ENCODE measurements at regions of chr4 and their contacts with region 1.

Region 1: DNA sequence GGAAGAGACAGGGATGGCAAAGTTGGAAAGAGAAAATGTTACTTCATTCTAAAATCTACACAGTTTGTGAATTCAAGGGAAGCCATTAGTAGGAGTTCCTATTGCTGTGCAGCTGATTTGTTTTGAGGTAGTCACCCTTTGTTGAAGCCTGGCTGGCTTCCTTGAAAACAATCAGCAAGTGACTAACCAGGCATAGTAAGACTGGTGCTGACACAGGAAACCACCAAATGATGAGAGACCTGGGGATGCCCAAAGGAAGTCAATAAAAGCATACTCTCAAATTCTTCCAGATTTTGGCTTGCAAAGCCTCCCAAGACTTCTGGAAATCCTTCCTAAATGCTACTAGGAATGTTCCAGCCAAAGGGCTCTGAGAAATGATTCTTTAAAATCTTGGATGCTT is 23.9 kb upstream of the PRDM8 start:
- DNase-seq: peak; percentile 71
- H3K4me3 Mint-ChIP-seq: peak overlapping the region; percentile 18
- H3K27ac Mint-ChIP-seq: peak overlapping the region; percentile 81
- H3K4me1 Mint-ChIP-seq: peaks cover 55% of the 10 kb centered on the region
- H3K27me3 Mint-ChIP-seq: no peaks in the 10 kb centered on the region

Region 2: GRCh38 chr4:80138551-80139538 is 34.6 kb before region 1 on chr4:
- CTCF ChIA-PET with region 1: interaction called, 10 read pairs
- POLR2A ChIA-PET with region 1: interaction called, 3 read pairs
- intact Hi-C with region 1: loop called (anchors 1 kb)
- DNase-seq: peak; percentile 77
- H3K4me3 Mint-ChIP-seq: no peak overlapping the region
- H3K27ac Mint-ChIP-seq: peak overlapping the region; percentile 64
- H3K4me1 Mint-ChIP-seq: peaks cover 57% of the 10 kb centered on the region
- H3K27me3 Mint-ChIP-seq: no peaks in the 10 kb centered on the region

Region 3: GRCh38 chr4:80153874-80154544 is 19.4 kb before region 1 on chr4:
- CTCF ChIA-PET with region 1: interaction called, 3 read pairs
- POLR2A ChIA-PET with region 1: interaction called, 12 read pairs
- intact Hi-C with region 1: loop called (anchors 1 kb)
- DNase-seq: no peak
- H3K4me3 Mint-ChIP-seq: peak overlapping the region; percentile 6
- H3K27ac Mint-ChIP-seq: peak overlapping the region; percentile 52
- H3K4me1 Mint-ChIP-seq: peaks cover 20% of the 10 kb centered on the region
- H3K27me3 Mint-ChIP-seq: no peaks in the 10 kb centered on the region

Region 4: DNA sequence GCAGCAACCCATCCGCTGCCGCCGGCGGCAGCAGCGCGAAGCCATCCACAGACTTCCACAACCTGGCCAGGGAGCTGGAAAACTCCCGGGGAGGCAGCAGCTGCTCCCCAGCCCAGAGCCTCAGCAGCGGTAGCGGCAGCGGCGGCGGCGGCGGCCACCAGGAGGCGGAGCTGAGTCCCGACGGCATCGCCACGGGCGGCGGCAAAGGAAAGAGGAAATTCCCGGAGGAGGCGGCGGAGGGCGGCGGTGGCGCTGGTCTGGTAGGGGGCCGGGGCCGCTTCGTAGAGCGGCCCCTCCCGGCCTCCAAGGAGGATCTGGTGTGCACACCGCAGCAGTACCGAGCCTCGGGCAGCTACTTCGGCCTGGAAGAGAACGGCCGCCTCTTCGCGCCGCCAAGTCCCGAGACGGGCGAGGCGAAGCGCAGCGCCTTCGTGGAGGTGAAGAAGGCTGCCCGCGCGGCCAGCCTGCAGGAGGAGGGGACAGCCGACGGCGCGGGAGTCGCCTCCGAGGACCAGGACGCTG is 28.9 kb after region 1 on chr4:
- CTCF ChIA-PET with region 1: interaction called, 14 read pairs
- POLR2A ChIA-PET with region 1: interaction called, 8 read pairs
- intact Hi-C with region 1: loop called (anchors 1 kb)
- DNase-seq: peak; percentile 86
- H3K4me3 Mint-ChIP-seq: peak overlapping the region; percentile 73
- H3K27ac Mint-ChIP-seq: peak overlapping the region; percentile 78
- H3K4me1 Mint-ChIP-seq: peaks cover 22% of the 10 kb centered on the region
- H3K27me3 Mint-ChIP-seq: peaks cover 6% of the 10 kb centered on the region